Activated B cell treated with CpG ODN at 0.5 μM for 24 hours (primary cell): ENCODE measurements at regions of chr1 and their contacts with region 1.

Region 1: GRCh38 chr1:9069326-9070100 is at the start of gene SLC2A5:
- DNase-seq: peak; percentile 65
- ATAC-seq: peak; percentile 98
- H3K4me3 Mint-ChIP-seq: peak within 1 kb of the TSS; percentile 83
- H3K27ac Mint-ChIP-seq: peak within 1 kb of the TSS; percentile 64
- H3K4me1 Mint-ChIP-seq: peaks cover 71% of the 10 kb centered on the region
- H3K27me3 Mint-ChIP-seq: no peaks in the 10 kb centered on the region
- CTCF ChIP-seq: no peak
- total RNA-seq, gene SLC2A5: 3.6 and 4.5 TPM in 2 replicates

Region 2: GRCh38 chr1:8780405-8780804 is 289.1 kb before region 1 on chr1:
- CTCF ChIA-PET with region 1: no interaction called
- POLR2A ChIA-PET with region 1: no interaction called
- intact Hi-C with region 1: no loop called
- DNase-seq: no peak
- ATAC-seq: no peak
- H3K4me3 Mint-ChIP-seq: no peak overlapping the region
- H3K27ac Mint-ChIP-seq: no peak overlapping the region
- H3K4me1 Mint-ChIP-seq: peaks cover 28% of the 10 kb centered on the region
- H3K27me3 Mint-ChIP-seq: no peaks in the 10 kb centered on the region
- CTCF ChIP-seq: no peak

Region 3: GRCh38 chr1:10489291-10490055 is 1420.0 kb after region 1 on chr1:
- CTCF ChIA-PET with region 1: no interaction called
- POLR2A ChIA-PET with region 1: interaction called, 13 read pairs
- intact Hi-C with region 1: no loop called
- DNase-seq: no peak
- ATAC-seq: no peak
- H3K4me3 Mint-ChIP-seq: no peak overlapping the region
- H3K27ac Mint-ChIP-seq: no peak overlapping the region
- H3K4me1 Mint-ChIP-seq: peaks cover 2% of the 10 kb centered on the region
- H3K27me3 Mint-ChIP-seq: no peaks in the 10 kb centered on the region
- CTCF ChIP-seq: no peak